ENCODE measurements at regions of chr9 and their contacts with region 1.

Region 1: GRCh38 chr9:93996863-93997262 is 41.7 kb upstream of the BARX1 start:
- DNase-seq: no peak

Region 2: DNA sequence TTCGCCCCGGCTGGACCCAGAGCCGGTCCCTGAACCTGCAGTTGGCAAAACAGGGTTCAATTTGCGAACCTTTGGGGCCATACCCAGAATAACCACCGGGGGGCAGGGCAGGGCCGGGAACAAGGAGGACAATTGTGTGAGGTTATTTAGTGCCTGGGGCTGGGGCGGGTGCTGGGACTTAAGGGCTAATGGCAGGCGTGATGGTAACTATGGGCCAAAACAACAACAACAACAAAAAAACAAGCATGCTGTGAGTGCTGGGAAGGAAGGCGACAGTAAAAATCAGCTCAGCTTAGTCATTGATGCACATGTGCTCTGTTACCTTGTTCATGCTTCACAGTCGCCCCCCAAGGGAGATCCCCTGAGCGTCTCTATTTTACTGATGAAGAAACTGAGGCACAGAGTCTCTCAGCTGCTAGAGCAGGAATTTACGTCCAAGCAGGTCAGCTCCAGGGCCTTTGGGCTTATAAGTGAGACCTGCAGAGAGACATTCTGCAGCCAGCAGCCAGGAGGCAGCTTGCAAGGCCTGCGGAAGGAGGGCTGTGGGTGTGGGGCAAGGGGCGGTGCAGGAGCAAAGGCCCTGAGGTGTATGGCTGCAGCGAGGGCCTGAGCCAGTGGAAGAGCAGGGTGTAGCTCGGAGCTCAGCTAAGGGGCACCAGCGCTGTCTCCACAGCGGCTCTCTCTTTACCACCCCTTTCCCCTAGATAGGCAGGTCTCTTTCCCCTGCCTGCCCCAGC is 314.5 kb before region 1 on chr9:
- in situ Hi-C with region 1: loop called (anchors 25 kb)
- DNase-seq: peak; percentile 32

Region 3: DNA sequence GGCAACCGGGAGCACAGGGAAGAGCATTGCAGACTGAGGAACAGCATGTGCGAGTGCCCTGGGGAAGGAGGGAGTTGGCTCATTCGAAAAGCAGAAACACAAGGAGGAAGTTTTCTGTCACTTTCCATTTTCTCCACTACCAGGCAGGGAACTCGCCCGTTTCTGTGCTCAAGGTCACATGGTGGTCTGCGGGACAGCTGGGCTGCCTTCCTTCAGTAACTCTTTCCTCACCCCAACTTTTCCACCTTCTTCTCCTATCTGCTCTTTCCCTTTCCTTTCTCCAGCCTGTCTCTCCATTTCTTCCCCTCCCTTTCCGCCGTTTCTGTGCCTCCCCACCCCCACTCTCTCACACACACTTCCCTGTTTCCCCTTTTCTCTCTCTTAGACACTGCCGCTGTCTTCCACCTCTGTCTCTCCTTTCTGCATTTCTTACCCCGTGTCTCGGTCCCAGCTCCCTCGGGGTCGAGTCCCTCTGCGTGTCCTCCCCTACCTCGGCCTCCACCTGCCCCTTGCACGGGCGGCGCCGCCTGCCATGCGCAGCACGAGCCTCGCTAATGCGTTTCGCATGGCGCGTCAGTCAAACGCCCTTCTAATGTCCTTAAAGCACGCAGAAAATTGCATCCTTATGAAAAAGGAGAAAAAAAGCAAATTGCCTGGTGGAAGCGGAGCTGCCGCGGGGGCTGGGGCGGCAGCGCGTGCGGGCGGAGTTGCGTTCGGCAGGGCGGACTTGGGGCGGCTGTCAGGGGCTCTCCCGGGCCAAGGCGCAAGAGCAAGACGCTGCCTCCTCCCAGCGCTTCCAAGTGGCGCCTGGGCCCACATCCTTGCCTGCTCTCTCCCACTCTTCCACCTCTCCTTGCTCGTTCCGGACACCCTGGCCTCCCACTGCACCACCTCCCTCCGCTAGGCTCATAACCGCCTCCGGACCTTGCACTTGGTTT is 51.2 kb before region 1 on chr9:
- in situ Hi-C with region 1: no loop called
- DNase-seq: no peak

Region 4: DNA sequence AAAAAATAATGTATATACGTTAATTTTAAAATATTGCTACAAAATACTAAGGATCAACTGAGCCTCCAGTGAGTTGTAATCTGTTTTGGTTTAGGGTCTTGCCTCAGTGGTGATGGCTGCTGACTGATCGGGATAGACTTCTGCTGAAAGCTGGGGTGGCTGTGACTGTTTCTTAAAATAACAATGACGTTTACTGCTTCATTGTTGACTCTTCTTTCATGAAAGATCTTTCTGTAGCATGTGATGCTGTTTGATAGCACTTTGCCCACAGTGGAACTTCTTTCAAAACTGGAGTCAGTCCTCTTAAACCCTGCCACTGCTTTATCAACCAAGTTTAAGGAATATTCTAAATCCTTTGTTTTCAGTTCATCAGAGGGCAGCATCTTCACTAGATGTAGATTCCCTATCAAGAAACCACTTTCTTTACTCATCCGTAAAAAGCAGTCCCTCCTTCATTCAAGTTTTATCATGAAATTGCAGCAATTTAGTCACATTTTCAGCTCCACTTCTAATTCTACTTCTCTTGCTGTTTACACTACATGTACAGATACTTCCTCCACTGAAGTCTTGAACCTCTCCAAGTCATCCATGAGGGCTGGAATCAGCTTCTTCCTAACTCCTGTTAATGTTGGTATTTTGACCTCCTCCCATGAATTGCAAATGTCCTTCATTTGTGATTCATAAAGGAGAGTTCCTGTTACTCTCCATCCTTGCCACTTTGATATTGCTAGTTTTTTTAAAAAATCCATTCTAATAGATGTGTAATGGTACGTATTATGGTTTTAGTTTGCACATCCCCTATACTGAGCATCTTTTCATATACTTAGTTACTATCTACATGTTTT is 45.9 kb after region 1 on chr9:
- in situ Hi-C with region 1: no loop called
- DNase-seq: no peak

Measured in G401 (cell line).